ENCODE measurements at regions of chr4 and their contacts with region 1.

Region 1: GRCh38 chr4:8547108-8547970 is 32.9 kb upstream of the GPR78 start:
- DNase-seq: peak; percentile 56
- ATAC-seq: peak; percentile 81
- H3K4me3 ChIP-seq: no peak overlapping the region
- H3K27ac ChIP-seq: no peak overlapping the region
- H3K4me1 ChIP-seq: peaks cover 0 to 21% of the 10 kb centered on the region in 2 experiments; a peak in 3 of 4 replicates
- H3K27me3 ChIP-seq: 0 out of 2 replicates have a peak, but pooled peaks cover 2% of the 10 kb centered on the region
- CTCF ChIP-seq: peak in 2 of 3 experiments; percentile 70 to 77; a peak in 4 of 6 replicates
- POLR2A ChIP-seq: no peak
- RAD21 ChIP-seq: no peak

Region 2: DNA sequence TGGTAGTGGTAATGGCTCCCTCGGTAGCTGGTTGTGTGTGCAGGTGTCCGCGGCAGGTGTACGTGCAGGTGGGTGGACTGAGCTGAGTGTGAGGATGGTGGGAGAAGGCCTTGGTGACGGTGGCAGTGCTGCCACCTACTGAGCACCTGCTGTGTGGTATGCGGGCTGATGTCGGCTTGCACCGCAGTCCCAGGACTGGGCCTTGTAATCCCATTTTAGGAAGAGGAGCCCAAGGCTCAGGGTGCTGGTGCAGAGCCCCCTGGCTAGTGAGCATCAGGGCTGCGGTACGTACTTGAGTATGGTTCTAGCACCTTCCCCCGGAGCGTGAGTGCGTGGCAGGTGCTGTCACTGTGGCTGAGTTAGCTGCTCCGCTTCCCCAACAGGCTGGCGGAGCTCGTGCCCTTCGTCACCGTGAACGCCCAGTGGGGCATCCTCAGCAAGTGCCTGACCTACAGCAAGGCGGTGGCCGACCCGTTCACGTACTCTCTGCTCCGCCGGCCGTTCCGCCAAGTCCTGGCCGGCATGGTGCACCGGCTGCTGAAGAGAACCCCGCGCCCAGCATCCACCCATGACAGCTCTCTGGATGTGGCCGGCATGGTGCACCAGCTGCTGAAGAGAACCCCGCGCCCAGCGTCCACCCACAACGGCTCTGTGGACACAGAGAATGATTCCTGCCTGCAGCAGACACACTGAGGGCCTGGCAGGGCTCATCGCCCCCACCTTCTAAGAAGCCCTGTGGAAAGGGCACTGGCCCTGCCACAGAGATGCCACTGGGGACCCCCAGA is 39.5 kb after region 1 on chr4:
- CTCF ChIA-PET with region 1: interaction called, 5 read pairs
- POLR2A ChIA-PET with region 1: no interaction called
- RAD21 ChIA-PET with region 1: no interaction called
- intact Hi-C with region 1: loop called (anchors 5 kb)
- DNase-seq: no peak
- ATAC-seq: peak; percentile 87
- H3K4me3 ChIP-seq: no peak overlapping the region
- H3K27ac ChIP-seq: no peak overlapping the region
- H3K4me1 ChIP-seq: no peaks in the 10 kb centered on the region
- H3K27me3 ChIP-seq: peaks cover 12% of the 10 kb centered on the region; the same call in 1 of the 2 replicates
- CTCF ChIP-seq: peak; percentile 35 to 63 (median 49); a peak in 4 of 6 replicates
- POLR2A ChIP-seq: no peak
- RAD21 ChIP-seq: peak; percentile 60

Region 3: GRCh38 chr4:8665406-8666360 is 118.3 kb after region 1 on chr4:
- CTCF ChIA-PET with region 1: no interaction called
- POLR2A ChIA-PET with region 1: no interaction called
- RAD21 ChIA-PET with region 1: no interaction called
- intact Hi-C with region 1: no loop called
- DNase-seq: no peak
- ATAC-seq: no peak
- H3K4me3 ChIP-seq: no peak overlapping the region
- H3K27ac ChIP-seq: no peak overlapping the region
- H3K4me1 ChIP-seq: peaks cover 0 to 8% of the 10 kb centered on the region in 2 experiments; a peak in 1 of 4 replicates
- H3K27me3 ChIP-seq: peaks cover 31% of the 10 kb centered on the region
- CTCF ChIP-seq: no peak
- POLR2A ChIP-seq: no peak
- RAD21 ChIP-seq: no peak

Measured in HCT116 (cell line).